ENCODE measurements at regions of chr4 and their contacts with region 1.

Region 1: GRCh38 chr4:56828784-56829535 is 7.5 kb upstream of the SPINK2 start:
- DNase-seq: no peak
- H3K4me3 ChIP-seq: no peak overlapping the region
- H3K4me3 Mint-ChIP-seq: no peak overlapping the region
- H3K27ac Mint-ChIP-seq: no peak overlapping the region
- H3K4me1 ChIP-seq: no peaks in the 10 kb centered on the region
- H3K4me1 Mint-ChIP-seq: no peaks in the 10 kb centered on the region
- H3K27me3 ChIP-seq: no peaks in the 10 kb centered on the region
- H3K27me3 Mint-ChIP-seq: no peaks in the 10 kb centered on the region
- CTCF ChIP-seq: no peak

Region 2: GRCh38 chr4:55920571-55920970 is 908.4 kb before region 1 on chr4:
- CTCF ChIA-PET with region 1: no interaction called
- POLR2A ChIA-PET with region 1: no interaction called
- intact Hi-C with region 1: no loop called
- DNase-seq: no peak
- H3K4me3 ChIP-seq: no peak overlapping the region
- H3K4me3 Mint-ChIP-seq: no peak overlapping the region
- H3K27ac Mint-ChIP-seq: no peak overlapping the region
- H3K4me1 ChIP-seq: no peaks in the 10 kb centered on the region
- H3K4me1 Mint-ChIP-seq: no peaks in the 10 kb centered on the region
- H3K27me3 ChIP-seq: no peaks in the 10 kb centered on the region
- H3K27me3 Mint-ChIP-seq: no peaks in the 10 kb centered on the region
- CTCF ChIP-seq: no peak

Region 3: GRCh38 chr4:56575820-56576429 is 253.0 kb before region 1 on chr4:
- CTCF ChIA-PET with region 1: no interaction called
- POLR2A ChIA-PET with region 1: no interaction called
- intact Hi-C with region 1: loop called (anchors 10 kb)
- DNase-seq: no peak
- H3K4me3 ChIP-seq: no peak overlapping the region
- H3K4me3 Mint-ChIP-seq: no peak overlapping the region
- H3K27ac Mint-ChIP-seq: no peak overlapping the region
- H3K4me1 ChIP-seq: no peaks in the 10 kb centered on the region
- H3K4me1 Mint-ChIP-seq: no peaks in the 10 kb centered on the region
- H3K27me3 ChIP-seq: no peaks in the 10 kb centered on the region
- H3K27me3 Mint-ChIP-seq: no peaks in the 10 kb centered on the region
- CTCF ChIP-seq: peak; percentile 31 to 46

Measured in Caco-2 (cell line).